Naive thymus-derived CD4-positive, alpha-beta T cell (primary cell): ENCODE measurements at regions of chr1 and their contacts with region 1.

Region 1: DNA sequence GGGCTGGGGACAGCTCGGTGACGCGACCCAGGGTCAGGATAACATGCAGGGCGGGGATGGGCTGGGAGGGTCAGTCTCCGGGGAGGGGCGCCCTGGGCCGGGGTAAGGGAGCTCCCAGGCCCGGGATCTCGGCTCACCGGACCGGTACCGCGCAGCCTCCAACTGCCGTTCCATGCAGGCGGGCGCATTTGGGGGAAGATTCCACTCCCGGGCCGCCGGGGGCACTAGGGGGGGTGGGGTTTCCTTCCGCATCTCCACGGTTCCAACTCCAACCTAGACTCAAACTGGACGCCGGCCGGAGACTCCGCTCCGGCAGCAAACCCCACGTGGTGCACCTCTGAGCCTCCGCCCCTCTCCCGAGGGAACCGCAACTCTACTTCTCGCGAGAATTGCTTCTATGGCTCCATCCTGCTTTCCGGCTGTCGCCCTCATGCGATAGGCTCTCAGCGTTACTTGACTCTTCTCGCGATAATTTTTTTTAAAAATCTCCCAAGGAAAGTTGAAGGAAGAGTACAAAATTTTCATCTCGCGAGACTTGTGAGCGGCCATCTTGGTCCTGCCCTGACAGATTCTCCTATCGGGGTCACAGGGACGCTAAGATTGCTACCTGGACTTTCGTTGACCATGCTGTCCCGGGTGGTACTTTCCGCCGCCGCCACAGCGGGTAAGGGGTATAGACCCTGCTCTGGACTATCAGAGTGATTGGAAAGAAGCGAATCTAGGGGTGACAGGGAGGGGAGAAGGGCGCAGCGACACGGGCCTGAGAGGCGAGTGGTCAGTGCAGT is at the starts of genes ATP5PB and WDR77:
- DNase-seq: peak; percentile 66 to 97 (median 94)
- ATAC-seq: peak; percentile 98
- H3K4me3 ChIP-seq: peak within 1 kb of the TSS; percentile 89
- H3K4me3 Mint-ChIP-seq: peak within 1 kb of the TSS; percentile 97 to 100 (median 100)
- H3K27ac ChIP-seq: peak within 1 kb of the TSS; percentile 98
- H3K27ac Mint-ChIP-seq: peak within 1 kb of the TSS; percentile 95 to 100 (median 99)
- H3K4me1 ChIP-seq: peaks cover 51 to 55% of the 10 kb centered on the region in 2 donors
- H3K4me1 Mint-ChIP-seq: peaks cover 43 to 92% (median 78%) of the 10 kb centered on the region in 7 donors
- H3K27me3 ChIP-seq: no peaks in the 10 kb centered on the region
- H3K27me3 Mint-ChIP-seq: no peaks in the 10 kb centered on the region
- total RNA-seq, gene ATP5PB: 64.9 to 298 (median 98.7) TPM
- total RNA-seq, gene WDR77: 20.7 to 39.9 (median 29.5) TPM

Region 2: DNA sequence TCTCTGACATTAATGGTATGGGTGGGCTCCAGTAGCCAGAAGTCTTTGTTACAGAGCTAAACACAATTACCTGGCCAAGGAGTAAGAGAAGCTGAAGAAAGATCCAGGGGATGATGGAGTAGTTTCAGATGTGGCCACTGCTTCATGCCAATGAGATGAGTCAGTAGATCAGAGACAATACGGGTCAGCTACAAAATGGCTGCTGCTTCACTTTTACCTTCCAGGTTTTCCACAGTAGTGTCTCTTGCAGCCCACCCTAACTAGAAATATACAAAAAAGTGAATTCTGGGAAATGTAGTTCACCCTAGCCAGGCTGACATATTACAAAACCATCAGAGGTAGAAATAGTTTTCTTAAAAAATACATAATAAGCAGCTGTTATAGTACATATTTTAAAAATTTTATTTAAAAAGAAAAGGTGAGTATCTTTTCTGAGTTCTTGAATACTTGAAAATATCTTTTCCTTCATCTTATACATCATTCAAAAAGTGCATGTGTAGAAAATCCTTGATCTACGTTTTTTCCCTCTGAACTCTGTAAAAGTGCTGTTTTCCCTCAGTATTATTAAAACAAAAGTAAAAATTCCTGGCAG is 521.5 kb before region 1 on chr1:
- CTCF ChIA-PET with region 1: no interaction called
- POLR2A ChIA-PET with region 1: no interaction called
- intact Hi-C with region 1: no loop called
- DNase-seq: no peak
- ATAC-seq: no peak
- H3K4me3 ChIP-seq: no peak overlapping the region
- H3K4me3 Mint-ChIP-seq: no peak overlapping the region
- H3K27ac ChIP-seq: no peak overlapping the region
- H3K27ac Mint-ChIP-seq: no peak overlapping the region
- H3K4me1 ChIP-seq: no peaks in the 10 kb centered on the region
- H3K4me1 Mint-ChIP-seq: no peaks in the 10 kb centered on the region
- H3K27me3 ChIP-seq: no peaks in the 10 kb centered on the region
- H3K27me3 Mint-ChIP-seq: peaks cover 0 to 8% (median 0%) of the 10 kb centered on the region in 5 donors

Region 3: GRCh38 chr1:111139956-111140679 is 309.0 kb before region 1 on chr1 and contains the starts of genes CEPT1 and DRAM2:
- CTCF ChIA-PET with region 1: no interaction called
- POLR2A ChIA-PET with region 1: interaction called, 3 read pairs
- intact Hi-C with region 1: loop called (anchors 1 kb)
- DNase-seq: peak; percentile 77 to 93 (median 89)
- ATAC-seq: peak; percentile 95
- H3K4me3 ChIP-seq: peak within 1 kb of the TSS; percentile 91
- H3K4me3 Mint-ChIP-seq: peak within 1 kb of the TSS; percentile 87 to 100 (median 98)
- H3K27ac ChIP-seq: peak within 1 kb of the TSS; percentile 93
- H3K27ac Mint-ChIP-seq: peak within 1 kb of the TSS; percentile 91 to 100 (median 97)
- H3K4me1 ChIP-seq: peaks cover 18 to 22% of the 10 kb centered on the region in 2 donors
- H3K4me1 Mint-ChIP-seq: peaks cover 40 to 75% (median 57%) of the 10 kb centered on the region in 7 donors
- H3K27me3 ChIP-seq: no peaks in the 10 kb centered on the region
- H3K27me3 Mint-ChIP-seq: no peaks in the 10 kb centered on the region
- total RNA-seq, gene CEPT1: 39.1 to 57.5 (median 40.2) TPM
- total RNA-seq, gene DRAM2: 26.9 to 51.6 (median 43.5) TPM

Region 4: DNA sequence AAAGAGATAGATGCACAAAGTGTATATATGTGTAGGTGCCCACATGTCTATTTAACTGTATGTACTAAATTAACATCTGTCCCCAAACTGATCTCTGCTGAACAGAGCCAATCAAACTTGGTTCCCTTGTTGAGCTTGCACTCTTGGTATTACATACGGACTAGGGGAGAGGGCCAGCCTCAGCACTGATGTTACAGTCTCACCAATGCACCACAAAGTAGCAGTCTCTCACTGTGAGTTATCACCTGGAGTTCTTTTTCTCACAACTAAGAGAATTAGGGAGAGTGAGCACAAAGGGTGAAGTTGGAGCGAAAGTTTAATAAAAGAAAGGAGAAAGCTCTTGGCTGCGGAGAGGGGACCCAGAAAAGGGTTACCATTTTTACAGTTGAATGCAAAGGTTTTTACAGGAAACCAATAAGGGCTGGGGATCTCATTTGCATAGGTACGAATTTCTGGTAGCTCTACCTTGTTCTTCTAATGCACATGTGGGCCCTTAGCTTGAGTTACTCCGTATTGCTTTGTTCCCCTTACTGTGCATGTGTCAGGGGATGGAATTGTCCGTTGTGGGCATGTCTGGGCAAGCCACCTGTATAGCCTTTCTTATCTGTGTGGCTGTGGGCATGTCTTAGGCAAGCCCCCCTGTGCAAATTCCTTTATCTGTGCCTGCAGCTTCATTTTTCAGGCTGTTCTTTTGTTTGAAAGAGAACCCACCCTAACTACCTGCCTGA is 234.9 kb before region 1 on chr1:
- CTCF ChIA-PET with region 1: no interaction called
- POLR2A ChIA-PET with region 1: no interaction called
- intact Hi-C with region 1: loop called in 1 of 2 experiments (anchors 2 kb)
- DNase-seq: no peak
- ATAC-seq: no peak
- H3K4me3 ChIP-seq: peak overlapping the region; percentile 12
- H3K4me3 Mint-ChIP-seq: peak overlapping the region; percentile 60 to 88 (median 81)
- H3K27ac ChIP-seq: peak overlapping the region; percentile 75
- H3K27ac Mint-ChIP-seq: peak overlapping the region; percentile 94 to 100 (median 97)
- H3K4me1 ChIP-seq: peaks cover 65 to 67% of the 10 kb centered on the region in 2 donors
- H3K4me1 Mint-ChIP-seq: peaks cover 66 to 98% (median 93%) of the 10 kb centered on the region in 7 donors
- H3K27me3 ChIP-seq: no peaks in the 10 kb centered on the region
- H3K27me3 Mint-ChIP-seq: peaks cover 0 to 2% (median 0%) of the 10 kb centered on the region in 5 donors

Region 5: DNA sequence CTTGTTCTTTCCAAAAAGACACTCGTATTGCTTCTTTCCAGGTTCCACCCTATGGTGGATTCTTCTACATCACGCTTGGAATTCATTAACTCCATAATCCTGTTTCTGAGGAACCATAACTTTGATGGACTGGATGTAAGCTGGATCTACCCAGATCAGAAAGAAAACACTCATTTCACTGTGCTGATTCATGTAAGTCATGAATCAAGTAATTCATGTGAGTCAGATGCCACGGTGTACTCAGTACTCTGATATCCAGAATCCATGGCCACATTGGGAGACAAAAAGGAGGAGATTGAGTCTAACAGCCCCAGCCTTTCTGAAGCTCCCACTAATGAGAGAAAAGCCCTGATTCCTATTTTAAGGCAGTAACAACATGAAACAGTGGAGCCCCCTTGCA is 214.2 kb before region 1 on chr1:
- CTCF ChIA-PET with region 1: no interaction called
- POLR2A ChIA-PET with region 1: no interaction called
- intact Hi-C with region 1: no loop called
- DNase-seq: no peak
- ATAC-seq: no peak
- H3K4me3 ChIP-seq: no peak overlapping the region
- H3K4me3 Mint-ChIP-seq: no peak overlapping the region
- H3K27ac ChIP-seq: no peak overlapping the region
- H3K27ac Mint-ChIP-seq: peak overlapping the region in 2 of 9 donors; percentile 61 to 83
- H3K4me1 ChIP-seq: peaks cover 3 to 24% of the 10 kb centered on the region in 2 donors
- H3K4me1 Mint-ChIP-seq: peaks cover 29 to 88% (median 67%) of the 10 kb centered on the region in 7 donors
- H3K27me3 ChIP-seq: no peaks in the 10 kb centered on the region
- H3K27me3 Mint-ChIP-seq: no peaks in the 10 kb centered on the region

Region 6: DNA sequence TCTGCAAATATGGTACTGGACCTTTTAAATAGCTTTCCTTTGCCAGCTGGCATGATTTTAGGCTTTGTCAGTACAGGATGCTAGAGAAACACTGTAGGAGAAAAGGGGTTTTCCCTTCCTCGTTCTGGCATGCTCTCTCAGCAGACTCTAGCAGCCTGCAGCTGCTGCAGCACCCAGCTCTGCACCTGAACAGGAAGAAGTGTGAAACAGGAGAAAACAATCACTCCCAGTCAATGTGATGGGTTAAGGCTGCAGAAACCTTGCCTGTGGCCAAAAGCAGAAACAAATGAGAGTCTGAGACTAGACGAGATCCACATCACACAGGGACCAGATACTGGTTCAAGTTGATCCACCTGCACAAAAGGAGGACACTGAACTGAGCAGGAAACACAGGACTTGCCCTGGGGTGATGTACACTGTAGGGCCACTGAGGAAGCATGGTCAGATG is 42.8 kb before region 1 on chr1:
- CTCF ChIA-PET with region 1: no interaction called
- POLR2A ChIA-PET with region 1: no interaction called
- intact Hi-C with region 1: loop called in 1 of 2 experiments (anchors 2 kb)
- DNase-seq: peak in 8 of 9 donors; percentile 33 to 74 (median 64)
- ATAC-seq: peak; percentile 99
- H3K4me3 ChIP-seq: no peak overlapping the region
- H3K4me3 Mint-ChIP-seq: peak overlapping the region; percentile 29 to 81 (median 61)
- H3K27ac ChIP-seq: peak overlapping the region; percentile 54
- H3K27ac Mint-ChIP-seq: peak overlapping the region in 8 of 9 donors; percentile 67 to 90 (median 78)
- H3K4me1 ChIP-seq: peaks cover 12 to 24% of the 10 kb centered on the region in 2 donors
- H3K4me1 Mint-ChIP-seq: peaks cover 14 to 38% (median 31%) of the 10 kb centered on the region in 7 donors
- H3K27me3 ChIP-seq: no peaks in the 10 kb centered on the region
- H3K27me3 Mint-ChIP-seq: peaks cover 0 to 26% (median 0%) of the 10 kb centered on the region in 5 donors

Region 7: GRCh38 chr1:111471012-111471411 is 21.9 kb after region 1 on chr1:
- CTCF ChIA-PET with region 1: interaction called, 11 read pairs
- POLR2A ChIA-PET with region 1: interaction called, 96 read pairs
- intact Hi-C with region 1: loop called (anchors 1 kb)
- DNase-seq: peak in 8 of 9 donors; percentile 40 to 89 (median 84)
- ATAC-seq: peak; percentile 96
- H3K4me3 ChIP-seq: peak overlapping the region; percentile 37
- H3K4me3 Mint-ChIP-seq: no peak overlapping the region
- H3K27ac ChIP-seq: peak overlapping the region; percentile 68
- H3K27ac Mint-ChIP-seq: no peak overlapping the region
- H3K4me1 ChIP-seq: peaks cover 45 to 49% of the 10 kb centered on the region in 2 donors
- H3K4me1 Mint-ChIP-seq: peaks cover 10 to 26% (median 15%) of the 10 kb centered on the region in 7 donors
- H3K27me3 ChIP-seq: no peaks in the 10 kb centered on the region
- H3K27me3 Mint-ChIP-seq: no peaks in the 10 kb centered on the region

Region 8: GRCh38 chr1:111739194-111739924 is 290.2 kb after region 1 on chr1 and contains the start of gene INKA2:
- CTCF ChIA-PET with region 1: no interaction called
- POLR2A ChIA-PET with region 1: no interaction called
- intact Hi-C with region 1: loop called in 1 of 2 experiments (anchors 1 kb)
- DNase-seq: peak in 7 of 9 donors; percentile 22 to 87 (median 33)
- ATAC-seq: peak; percentile 84
- H3K4me3 ChIP-seq: peak within 1 kb of the TSS; percentile 75
- H3K4me3 Mint-ChIP-seq: peak within 1 kb of the TSS; percentile 82 to 95 (median 88)
- H3K27ac ChIP-seq: no peak within 1 kb of the TSS
- H3K27ac Mint-ChIP-seq: peak within 1 kb of the TSS in 6 of 9 donors; percentile 33 to 71 (median 55)
- H3K4me1 ChIP-seq: peaks cover 8 to 10% of the 10 kb centered on the region in 2 donors
- H3K4me1 Mint-ChIP-seq: peaks cover 15 to 21% (median 16%) of the 10 kb centered on the region in 7 donors
- H3K27me3 ChIP-seq: peaks cover 6 to 17% of the 10 kb centered on the region in 2 donors
- H3K27me3 Mint-ChIP-seq: peaks cover 20 to 46% (median 30%) of the 10 kb centered on the region in 5 donors
- total RNA-seq, gene INKA2: 0.94 to 5.6 (median 2.3) TPM in 3 of 5 experiments, not detected in the others